Activated CD4-positive, alpha-beta T cell treated with anti-CD3 and anti-CD28 coated beads for 36 hours (primary cell): ENCODE measurements at regions of chr2 and their contacts with region 1.

Region 1: GRCh38 chr2:28810384-28811285 is at the start of gene SPDYA:
- DNase-seq: peak; percentile 90
- ATAC-seq: peak; percentile 95
- H3K4me3 Mint-ChIP-seq: peak within 1 kb of the TSS; percentile 59
- H3K27ac Mint-ChIP-seq: no peak within 1 kb of the TSS
- H3K4me1 Mint-ChIP-seq: peaks cover 14% of the 10 kb centered on the region
- H3K27me3 Mint-ChIP-seq: no peaks in the 10 kb centered on the region
- total RNA-seq, gene SPDYA: 0.93 to 1.2 TPM

Region 2: GRCh38 chr2:28870146-28870891 is 59.7 kb after region 1 on chr2 and contains the start of gene TRMT61B:
- CTCF ChIA-PET with region 1: no interaction called
- POLR2A ChIA-PET with region 1: no interaction called
- intact Hi-C with region 1: loop called (anchors 1 kb)
- DNase-seq: peak; percentile 98
- ATAC-seq: peak; percentile 99
- H3K4me3 Mint-ChIP-seq: peak within 1 kb of the TSS; percentile 94
- H3K27ac Mint-ChIP-seq: peak within 1 kb of the TSS; percentile 97
- H3K4me1 Mint-ChIP-seq: peaks cover 25% of the 10 kb centered on the region
- H3K27me3 Mint-ChIP-seq: no peaks in the 10 kb centered on the region
- total RNA-seq, gene TRMT61B: 22.0 to 22.2 TPM

Region 3: GRCh38 chr2:28952816-28953211 is 142.2 kb after region 1 on chr2:
- CTCF ChIA-PET with region 1: no interaction called
- POLR2A ChIA-PET with region 1: no interaction called
- intact Hi-C with region 1: no loop called
- DNase-seq: no peak
- ATAC-seq: peak; percentile 67
- H3K4me3 Mint-ChIP-seq: no peak overlapping the region
- H3K27ac Mint-ChIP-seq: no peak overlapping the region
- H3K4me1 Mint-ChIP-seq: peaks cover 3% of the 10 kb centered on the region
- H3K27me3 Mint-ChIP-seq: no peaks in the 10 kb centered on the region